Mammary epithelial cell (primary cell): ENCODE measurements at regions of chr13 and their contacts with region 1.

Region 1: GRCh38 chr13:45658586-45659235 is 43.2 kb upstream of the ERICH6B start:
- DNase-seq: peak; percentile 78
- H3K4me3 ChIP-seq: no peak overlapping the region
- H3K27ac ChIP-seq: peak overlapping the region; percentile 61
- H3K4me1 ChIP-seq: peaks cover 16% of the 10 kb centered on the region
- H3K27me3 ChIP-seq: no peaks in the 10 kb centered on the region
- CTCF ChIP-seq: no peak

Region 2: DNA sequence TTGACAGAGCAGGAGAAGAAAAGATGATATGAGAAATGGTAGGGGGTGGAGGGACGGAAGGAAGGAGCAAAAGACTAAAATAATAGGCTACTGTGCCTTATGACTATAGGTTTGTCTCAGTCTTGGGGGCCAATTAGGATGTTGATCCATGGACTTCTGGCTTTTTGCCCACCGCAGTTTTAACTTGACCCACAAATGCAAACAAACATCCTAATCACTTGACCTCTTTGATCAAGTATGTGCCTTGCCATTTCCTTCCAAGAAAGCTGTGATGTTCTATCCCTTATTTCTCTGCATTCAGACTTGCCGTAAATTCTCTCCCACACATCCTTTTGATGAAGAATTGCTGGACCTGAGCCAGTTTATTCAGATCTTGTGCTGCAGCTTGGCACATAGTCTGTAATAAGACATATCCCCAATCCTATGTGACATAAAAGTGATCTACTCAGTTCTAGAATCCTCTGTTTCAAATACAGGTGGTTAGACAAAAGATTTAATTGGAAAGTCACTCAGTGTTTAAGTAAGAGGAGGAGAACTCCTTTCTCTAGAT is 380.5 kb before region 1 on chr13:
- CTCF ChIA-PET with region 1: no interaction called
- dilution Hi-C with region 1: no loop called
- in situ Hi-C with region 1: no loop called
- intact Hi-C with region 1: no loop called
- DNase-seq: no peak
- H3K4me3 ChIP-seq: no peak overlapping the region
- H3K27ac ChIP-seq: no peak overlapping the region
- H3K4me1 ChIP-seq: peaks cover 20% of the 10 kb centered on the region
- H3K27me3 ChIP-seq: no peaks in the 10 kb centered on the region
- CTCF ChIP-seq: no peak

Region 3: GRCh38 chr13:45604892-45605291 is 53.8 kb before region 1 on chr13:
- CTCF ChIA-PET with region 1: no interaction called
- dilution Hi-C with region 1: loop called (anchors 5 kb)
- in situ Hi-C with region 1: no loop called
- intact Hi-C with region 1: no loop called
- DNase-seq: no peak
- H3K4me3 ChIP-seq: no peak overlapping the region
- H3K27ac ChIP-seq: no peak overlapping the region
- H3K4me1 ChIP-seq: no peaks in the 10 kb centered on the region
- H3K27me3 ChIP-seq: no peaks in the 10 kb centered on the region
- CTCF ChIP-seq: no peak